Cardiac septum (tissue), 1 donor: ENCODE measurements at regions of chr1 and their contacts with region 1.

Region 1: GRCh38 chr1:220767312-220768125 is 19.2 kb upstream of the MTARC1 start:
- DNase-seq: no peak

Region 2: GRCh38 chr1:220575718-220576497 is 191.6 kb before region 1 on chr1:
- intact Hi-C with region 1: no loop called
- DNase-seq: no peak

Region 3: DNA sequence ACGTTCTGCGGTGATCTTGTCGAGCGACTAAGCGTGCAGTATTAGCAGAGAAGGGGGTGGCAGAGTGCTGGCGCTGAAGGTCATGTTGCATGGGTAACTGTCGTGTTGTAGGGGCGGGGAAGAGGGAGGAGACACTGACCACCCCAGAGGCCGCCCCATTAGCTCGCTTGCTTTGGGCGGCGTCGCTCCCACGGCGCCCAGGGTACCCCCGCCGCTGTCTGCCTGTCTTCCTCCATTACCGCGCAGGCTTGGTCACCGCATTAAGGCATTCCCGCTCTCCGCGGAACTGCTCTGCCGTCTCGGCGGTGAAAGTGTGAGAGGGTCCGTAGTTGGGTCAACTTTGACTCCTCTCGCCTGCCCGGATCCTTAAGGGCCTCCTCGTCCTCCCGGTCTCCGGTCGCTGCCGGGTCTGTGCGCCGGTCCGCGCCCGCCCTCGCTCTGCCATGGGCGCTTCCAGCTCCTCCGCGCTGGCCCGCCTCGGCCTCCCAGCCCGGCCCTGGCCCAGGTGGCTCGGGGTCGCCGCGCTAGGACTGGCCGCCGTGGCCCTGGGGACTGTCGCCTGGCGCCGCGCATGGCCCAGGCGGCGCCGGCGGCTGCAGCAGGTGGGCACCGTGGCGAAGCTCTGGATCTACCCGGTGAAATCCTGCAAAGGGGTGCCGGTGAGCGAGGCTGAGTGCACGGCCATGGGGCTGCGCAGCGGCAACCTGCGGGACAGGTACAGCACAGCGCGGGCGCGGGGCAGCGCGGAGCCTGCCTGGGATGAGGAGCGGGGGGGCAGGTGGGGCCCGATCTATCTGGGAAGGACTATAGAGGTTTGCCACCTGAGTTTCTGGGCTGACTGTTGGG is 19.2 kb before region 1 on chr1 and contains the start of gene MTARC2:
- intact Hi-C with region 1: loop called (anchors 2 kb)
- DNase-seq: peak; percentile 92
- total RNA-seq, gene MTARC2: 22.1 TPM